Left cardiac atrium (tissue), 4 donors: ENCODE measurements at regions of chr15 and their contacts with region 1.

Region 1: GRCh38 chr15:71559098-71559497 is 251.3 kb upstream of the NR2E3 start:
- DNase-seq: no peak
- ATAC-seq: no peak

Region 2: DNA sequence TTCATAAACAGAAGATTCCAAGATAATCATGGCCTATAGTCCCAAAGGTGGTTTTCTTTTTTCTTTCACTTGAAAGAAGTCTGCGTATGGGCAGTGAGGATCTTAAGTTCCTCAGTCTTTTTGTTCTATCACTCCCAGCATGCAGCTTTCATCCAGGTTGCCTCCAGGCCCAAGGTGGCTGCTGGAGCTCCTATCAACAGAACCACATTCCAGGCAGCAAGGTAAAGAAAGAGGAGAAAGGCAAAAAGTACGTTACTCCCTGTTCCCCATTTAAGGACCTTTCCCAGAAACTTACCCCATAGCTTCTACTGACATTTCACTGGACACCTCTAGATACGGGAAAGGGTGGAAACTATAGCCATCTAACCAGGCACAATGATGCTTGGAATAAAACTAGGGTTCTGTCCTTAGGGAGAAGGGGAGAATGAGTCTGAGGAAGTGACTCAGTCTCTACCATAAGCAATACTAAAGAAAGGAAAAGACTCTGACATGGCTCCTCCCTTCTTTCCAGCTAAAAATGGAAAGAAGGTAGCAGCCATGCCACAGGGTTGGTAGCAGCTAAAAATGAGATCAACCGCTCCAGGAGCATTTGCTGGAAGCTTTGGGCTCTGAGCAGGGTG is 62.7 kb before region 1 on chr15:
- intact Hi-C with region 1: loop called in 1 of 2 experiments (anchors 10 kb)
- DNase-seq: no peak
- ATAC-seq: peak in 1 of 2 donors; percentile 25

Region 3: DNA sequence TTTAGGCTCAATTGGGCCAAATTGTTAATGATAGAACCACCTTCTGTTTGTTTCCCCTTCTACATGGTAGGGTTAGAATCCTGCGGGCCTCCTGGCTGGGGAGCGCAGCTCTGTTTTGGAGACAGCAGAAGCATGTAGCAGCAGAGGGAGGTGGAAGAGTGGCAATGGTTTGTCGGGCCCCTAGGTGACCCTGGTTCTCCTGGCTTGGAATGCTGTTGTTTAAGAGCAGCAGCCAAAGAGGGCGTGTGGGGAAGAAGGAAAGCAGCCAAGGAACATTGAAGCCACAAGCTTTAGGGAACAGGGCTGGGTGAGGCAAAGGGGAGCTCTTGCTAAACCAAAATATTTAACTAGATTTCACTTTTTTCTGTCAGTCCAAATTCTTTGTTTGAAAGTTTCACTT is 37.6 kb after region 1 on chr15:
- intact Hi-C with region 1: no loop called
- DNase-seq: peak; percentile 62
- ATAC-seq: peak; percentile 65 to 86